PC-3 (cell line): ENCODE measurements at regions of chr3 and their contacts with region 1.

Region 1: GRCh38 chr3:105686278-105686897 is 182.4 kb downstream of the CBLB start:
- DNase-seq: peak; percentile 59
- ATAC-seq: no peak
- H3K4me3 ChIP-seq: no peak overlapping the region
- H3K27ac ChIP-seq: no peak overlapping the region
- H3K4me1 ChIP-seq: no peaks in the 10 kb centered on the region
- H3K27me3 ChIP-seq: no peaks in the 10 kb centered on the region
- CTCF ChIP-seq: peak; percentile 93

Region 2: GRCh38 chr3:105722943-105723556 is 36.7 kb after region 1 on chr3:
- CTCF ChIA-PET with region 1: no interaction called
- POLR2A ChIA-PET with region 1: no interaction called
- intact Hi-C with region 1: no loop called
- DNase-seq: no peak
- ATAC-seq: no peak
- H3K4me3 ChIP-seq: no peak overlapping the region
- H3K27ac ChIP-seq: no peak overlapping the region
- H3K4me1 ChIP-seq: no peaks in the 10 kb centered on the region
- H3K27me3 ChIP-seq: no peaks in the 10 kb centered on the region
- CTCF ChIP-seq: no peak

Region 3: GRCh38 chr3:105965384-105965783 is 279.0 kb after region 1 on chr3:
- CTCF ChIA-PET with region 1: no interaction called
- POLR2A ChIA-PET with region 1: no interaction called
- intact Hi-C with region 1: loop called (anchors 10 kb)
- DNase-seq: no peak
- ATAC-seq: no peak
- H3K4me3 ChIP-seq: no peak overlapping the region
- H3K27ac ChIP-seq: no peak overlapping the region
- H3K4me1 ChIP-seq: peaks cover 38% of the 10 kb centered on the region
- H3K27me3 ChIP-seq: no peaks in the 10 kb centered on the region
- CTCF ChIP-seq: no peak

Region 4: DNA sequence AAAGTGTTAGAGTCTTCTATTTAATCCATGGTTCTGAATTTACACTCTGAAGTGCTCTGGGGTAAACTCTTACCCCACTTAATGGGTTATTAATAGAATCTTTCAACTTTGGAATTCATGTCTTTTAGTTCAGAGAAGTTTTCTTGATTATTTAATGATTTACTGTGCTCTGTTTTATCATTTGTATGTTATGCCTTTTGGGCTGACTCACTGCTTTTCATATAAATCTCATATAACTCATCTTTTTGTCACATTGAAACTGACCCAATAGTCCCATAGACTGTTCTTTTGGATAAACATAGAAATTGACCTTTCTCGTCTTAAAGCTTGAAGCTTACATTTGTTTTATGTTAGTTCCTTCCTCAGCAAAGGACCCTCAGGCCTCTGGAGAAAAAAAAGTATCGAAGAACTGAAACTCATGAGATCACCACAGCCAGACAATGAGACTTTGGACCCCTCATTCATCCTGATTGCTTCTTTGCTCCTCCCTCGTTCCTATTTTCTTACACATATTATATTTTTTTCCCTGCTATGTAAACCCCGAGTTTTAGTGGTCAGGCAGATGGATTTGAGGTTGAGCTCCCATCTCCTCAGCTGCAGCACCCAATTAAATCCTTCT is 411.5 kb after region 1 on chr3:
- CTCF ChIA-PET with region 1: no interaction called
- POLR2A ChIA-PET with region 1: no interaction called
- intact Hi-C with region 1: no loop called
- DNase-seq: no peak
- ATAC-seq: peak; percentile 76
- H3K4me3 ChIP-seq: no peak overlapping the region
- H3K27ac ChIP-seq: no peak overlapping the region
- H3K4me1 ChIP-seq: no peaks in the 10 kb centered on the region
- H3K27me3 ChIP-seq: no peaks in the 10 kb centered on the region
- CTCF ChIP-seq: no peak

Region 5: GRCh38 chr3:106119614-106120082 is 433.3 kb after region 1 on chr3:
- CTCF ChIA-PET with region 1: no interaction called
- POLR2A ChIA-PET with region 1: no interaction called
- intact Hi-C with region 1: loop called (anchors 5 kb)
- DNase-seq: peak; percentile 34
- ATAC-seq: no peak
- H3K4me3 ChIP-seq: no peak overlapping the region
- H3K27ac ChIP-seq: peak overlapping the region; percentile 58
- H3K4me1 ChIP-seq: peaks cover 75% of the 10 kb centered on the region
- H3K27me3 ChIP-seq: no peaks in the 10 kb centered on the region
- CTCF ChIP-seq: no peak

Region 6: DNA sequence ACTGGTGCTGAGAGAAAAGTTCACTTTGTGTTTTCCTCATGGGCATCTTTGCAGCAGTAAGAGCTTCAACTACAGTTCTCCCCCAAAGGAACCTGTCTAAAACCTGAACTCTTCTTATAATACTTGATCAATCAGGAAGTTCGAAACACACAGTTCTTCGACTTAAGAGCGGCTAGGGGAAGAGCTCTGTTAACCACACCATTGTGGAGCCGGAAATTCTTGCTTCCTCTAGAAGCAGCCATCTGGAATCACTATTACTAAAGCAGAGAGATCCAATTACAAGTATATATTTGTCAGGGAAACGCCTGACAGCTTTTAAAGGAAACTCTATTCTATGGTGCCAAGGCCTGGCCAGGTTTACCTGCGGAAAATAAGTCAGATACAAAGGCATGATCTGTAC is 519.8 kb after region 1 on chr3:
- CTCF ChIA-PET with region 1: no interaction called
- POLR2A ChIA-PET with region 1: no interaction called
- intact Hi-C with region 1: loop called (anchors 1 kb)
- DNase-seq: peak; percentile 14
- ATAC-seq: no peak
- H3K4me3 ChIP-seq: no peak overlapping the region
- H3K27ac ChIP-seq: no peak overlapping the region
- H3K4me1 ChIP-seq: no peaks in the 10 kb centered on the region; the same call in 1 of the 2 replicates
- H3K27me3 ChIP-seq: no peaks in the 10 kb centered on the region
- CTCF ChIP-seq: no peak

Region 7: GRCh38 chr3:106333911-106334618 is 647.7 kb after region 1 on chr3:
- CTCF ChIA-PET with region 1: no interaction called
- POLR2A ChIA-PET with region 1: no interaction called
- intact Hi-C with region 1: loop called (anchors 10 kb)
- DNase-seq: peak; percentile 94
- ATAC-seq: peak; percentile 74
- H3K4me3 ChIP-seq: peak overlapping the region; percentile 11; the same call in 1 of the 2 replicates
- H3K27ac ChIP-seq: peak overlapping the region; percentile 68
- H3K4me1 ChIP-seq: peaks cover 65% of the 10 kb centered on the region
- H3K27me3 ChIP-seq: no peaks in the 10 kb centered on the region
- CTCF ChIP-seq: no peak

Region 8: DNA sequence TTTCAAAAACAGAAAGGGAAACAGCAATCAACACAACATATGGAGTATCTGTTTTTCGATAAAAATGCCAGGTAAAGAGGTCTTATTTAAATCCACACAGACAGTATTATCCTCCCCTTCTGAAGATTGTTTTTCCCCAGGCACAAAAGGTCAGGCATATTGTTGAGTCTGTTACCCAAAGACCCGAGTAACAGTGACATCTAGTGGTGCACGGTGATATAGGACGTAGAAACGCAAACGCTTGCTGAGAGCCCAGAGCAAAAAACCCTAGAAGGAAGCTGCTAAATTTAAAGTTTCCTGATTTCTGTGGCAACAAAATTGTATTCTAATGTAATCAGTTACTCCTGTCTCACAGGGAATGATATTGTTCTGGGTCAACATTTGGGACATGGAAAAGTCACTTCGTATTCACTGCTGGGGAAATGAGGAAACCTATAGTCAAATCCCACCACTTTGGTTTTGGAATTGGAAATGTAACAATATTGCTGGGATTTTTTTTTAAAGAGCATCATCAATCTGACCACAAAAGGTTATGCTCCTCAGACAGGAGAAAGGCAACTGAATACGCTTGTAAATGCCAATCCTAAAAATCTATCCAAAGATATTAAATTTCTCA is 1378.2 kb after region 1 on chr3:
- CTCF ChIA-PET with region 1: no interaction called
- POLR2A ChIA-PET with region 1: no interaction called
- intact Hi-C with region 1: loop called (anchors 5 kb)
- DNase-seq: peak; percentile 91
- ATAC-seq: peak; percentile 84
- H3K4me3 ChIP-seq: no peak overlapping the region
- H3K27ac ChIP-seq: no peak overlapping the region
- H3K4me1 ChIP-seq: peaks cover 16% of the 10 kb centered on the region
- H3K27me3 ChIP-seq: no peaks in the 10 kb centered on the region
- CTCF ChIP-seq: peak; percentile 95

Region 9: GRCh38 chr3:107117922-107118536 is 1431.6 kb after region 1 on chr3:
- CTCF ChIA-PET with region 1: no interaction called
- POLR2A ChIA-PET with region 1: no interaction called
- intact Hi-C with region 1: loop called (anchors 5 kb)
- DNase-seq: peak; percentile 78
- ATAC-seq: peak; percentile 74
- H3K4me3 ChIP-seq: no peak overlapping the region
- H3K27ac ChIP-seq: no peak overlapping the region
- H3K4me1 ChIP-seq: peaks cover 9% of the 10 kb centered on the region; the same call in 1 of the 2 replicates
- H3K27me3 ChIP-seq: no peaks in the 10 kb centered on the region
- CTCF ChIP-seq: peak; percentile 90